Activated CD4-positive, alpha-beta T cell treated with anti-CD3 and anti-CD28 coated beads, Interleukin-2, amount 10 ng/mL, durations not matched to agents 24 days and 14 days (primary cell): ENCODE measurements at regions of chr3 and their contacts with region 1.

Region 1: DNA sequence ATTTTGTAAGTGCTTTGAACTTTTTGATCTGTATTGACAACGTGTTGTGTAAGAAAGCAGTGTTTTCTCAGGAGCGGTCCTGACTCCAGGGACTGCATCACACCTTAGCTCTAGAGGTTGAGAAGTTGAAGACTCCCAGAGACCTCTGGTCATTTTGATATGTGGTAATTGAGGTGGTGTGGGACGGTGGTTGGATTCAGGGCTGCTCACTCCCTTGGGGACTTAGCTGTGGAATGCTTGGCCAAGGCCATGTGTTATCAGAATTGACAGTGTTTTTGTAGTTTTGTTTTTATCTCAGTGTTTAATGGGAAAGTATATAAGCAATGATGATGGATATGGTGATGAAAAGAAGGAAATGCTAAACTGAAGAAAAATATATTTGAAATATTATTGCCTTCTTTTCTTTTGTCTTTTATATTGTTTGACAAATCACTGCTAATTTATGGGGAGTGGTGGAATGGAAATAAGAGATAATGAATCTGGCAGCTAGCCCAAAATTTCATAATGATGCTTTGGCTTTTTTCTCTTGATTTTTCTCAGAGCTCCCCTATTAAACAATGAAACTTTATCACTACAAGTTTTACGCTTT is 16.0 kb downstream of the CMSS1 start:
- DNase-seq: no peak
- H3K4me3 Mint-ChIP-seq: no peak overlapping the region
- H3K27ac Mint-ChIP-seq: no peak overlapping the region
- H3K4me1 Mint-ChIP-seq: peaks cover 15% of the 10 kb centered on the region
- H3K27me3 Mint-ChIP-seq: no peaks in the 10 kb centered on the region

Region 2: DNA sequence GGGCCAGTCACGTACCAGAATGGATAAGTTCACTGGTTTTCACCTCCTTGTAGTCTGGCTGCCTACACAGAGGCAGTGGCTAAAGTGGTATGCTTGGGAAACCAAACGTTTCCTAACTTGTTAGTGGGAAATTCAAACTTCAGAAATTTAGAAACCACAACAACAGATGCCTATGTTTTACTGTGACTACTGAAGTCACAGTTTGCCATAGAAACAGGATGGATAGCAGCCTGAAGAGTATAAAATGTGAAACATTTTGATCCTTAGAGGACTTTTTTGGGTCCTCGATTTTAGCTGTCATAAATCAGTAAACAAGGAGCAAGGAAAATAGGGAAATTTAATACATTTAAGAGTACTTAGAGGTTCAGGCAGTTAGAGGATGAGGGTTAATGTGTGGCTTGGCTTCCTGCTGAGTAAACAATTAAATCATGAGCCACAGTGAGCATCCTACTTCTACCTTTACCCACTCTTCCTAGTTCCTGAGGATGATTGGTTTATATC is 32.6 kb after region 1 on chr3:
- intact Hi-C with region 1: loop called (anchors 5 kb)
- DNase-seq: peak; percentile 81
- H3K4me3 Mint-ChIP-seq: peak overlapping the region; percentile 71
- H3K27ac Mint-ChIP-seq: peak overlapping the region; percentile 87
- H3K4me1 Mint-ChIP-seq: peaks cover 72% of the 10 kb centered on the region
- H3K27me3 Mint-ChIP-seq: no peaks in the 10 kb centered on the region

Region 3: GRCh38 chr3:100002599-100003350 is 169.1 kb after region 1 on chr3:
- intact Hi-C with region 1: no loop called
- DNase-seq: no peak
- H3K4me3 Mint-ChIP-seq: no peak overlapping the region
- H3K27ac Mint-ChIP-seq: no peak overlapping the region
- H3K4me1 Mint-ChIP-seq: peaks cover 17% of the 10 kb centered on the region
- H3K27me3 Mint-ChIP-seq: no peaks in the 10 kb centered on the region

Region 4: DNA sequence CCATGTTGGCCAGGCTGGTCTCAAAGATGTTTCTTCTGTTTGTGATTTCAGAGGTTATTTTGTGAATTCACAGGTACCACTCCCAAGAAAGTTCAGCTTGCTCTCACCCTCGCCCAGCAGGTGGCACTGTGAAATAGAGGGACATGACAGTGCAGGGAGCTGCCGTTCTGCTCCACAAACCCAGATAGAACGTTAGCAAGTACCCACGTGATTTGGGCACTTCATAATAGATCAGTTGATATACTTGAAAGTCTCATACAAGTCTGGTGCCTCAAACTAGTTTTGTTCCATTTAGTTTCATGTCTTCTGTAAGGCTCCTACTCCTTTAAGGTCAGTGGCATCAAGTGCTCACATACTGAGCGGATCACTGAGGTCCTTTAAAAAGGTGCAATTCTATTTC is 235.1 kb after region 1 on chr3:
- intact Hi-C with region 1: loop called (anchors 2 kb)
- DNase-seq: peak; percentile 94
- H3K4me3 Mint-ChIP-seq: no peak overlapping the region
- H3K27ac Mint-ChIP-seq: no peak overlapping the region
- H3K4me1 Mint-ChIP-seq: peaks cover 40% of the 10 kb centered on the region
- H3K27me3 Mint-ChIP-seq: no peaks in the 10 kb centered on the region

Region 5: DNA sequence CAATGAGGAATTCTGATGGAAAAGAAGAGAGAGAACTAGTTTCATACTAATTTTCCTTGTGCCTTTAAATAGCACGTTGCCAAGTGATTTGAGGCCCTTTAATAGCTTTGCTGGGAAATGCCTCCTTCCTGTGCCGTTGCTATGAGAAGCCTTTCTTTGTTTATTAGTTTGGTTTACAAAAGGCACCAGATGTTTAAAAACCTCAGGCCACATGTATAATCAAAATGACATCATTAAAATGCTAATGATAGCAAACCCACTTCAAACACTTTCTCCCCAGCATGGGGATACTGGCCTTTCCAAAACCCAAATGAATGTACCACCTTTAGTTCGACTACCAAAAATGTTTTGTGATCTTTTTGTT is 377.0 kb after region 1 on chr3:
- intact Hi-C with region 1: loop called (anchors 5 kb)
- DNase-seq: peak; percentile 75
- H3K4me3 Mint-ChIP-seq: no peak overlapping the region
- H3K27ac Mint-ChIP-seq: peak overlapping the region; percentile 82
- H3K4me1 Mint-ChIP-seq: peaks cover 20% of the 10 kb centered on the region
- H3K27me3 Mint-ChIP-seq: peaks cover 3% of the 10 kb centered on the region

Region 6: GRCh38 chr3:100254168-100254777 is 420.6 kb after region 1 on chr3:
- intact Hi-C with region 1: loop called (anchors 1 kb)
- DNase-seq: peak; percentile 86
- H3K4me3 Mint-ChIP-seq: no peak overlapping the region
- H3K27ac Mint-ChIP-seq: no peak overlapping the region
- H3K4me1 Mint-ChIP-seq: peaks cover 4% of the 10 kb centered on the region
- H3K27me3 Mint-ChIP-seq: no peaks in the 10 kb centered on the region

Region 7: DNA sequence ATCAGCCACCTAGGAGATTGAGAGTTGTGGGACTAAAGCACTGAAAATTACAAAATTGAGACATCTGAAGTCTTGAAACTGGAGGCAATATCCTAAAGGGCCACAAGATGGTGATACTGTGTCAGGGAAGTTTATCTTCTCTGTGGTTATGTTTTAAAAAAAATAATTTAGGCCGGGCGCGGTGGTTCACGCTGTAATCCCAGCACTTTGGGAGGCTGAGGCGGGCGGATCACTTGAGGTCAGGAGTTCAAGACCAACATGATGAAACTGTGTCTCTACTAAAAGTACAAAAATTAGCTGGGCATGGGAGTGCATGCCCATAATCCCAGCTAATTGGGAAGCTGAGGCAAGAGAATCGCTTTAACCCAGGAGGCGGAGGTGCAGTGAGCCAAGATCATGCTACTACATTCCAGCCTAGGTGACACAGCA is 482.9 kb after region 1 on chr3:
- intact Hi-C with region 1: loop called (anchors 5 kb)
- DNase-seq: peak; percentile 86
- H3K4me3 Mint-ChIP-seq: peak overlapping the region; percentile 40
- H3K27ac Mint-ChIP-seq: peak overlapping the region; percentile 55
- H3K4me1 Mint-ChIP-seq: peaks cover 11% of the 10 kb centered on the region
- H3K27me3 Mint-ChIP-seq: no peaks in the 10 kb centered on the region

Region 8: DNA sequence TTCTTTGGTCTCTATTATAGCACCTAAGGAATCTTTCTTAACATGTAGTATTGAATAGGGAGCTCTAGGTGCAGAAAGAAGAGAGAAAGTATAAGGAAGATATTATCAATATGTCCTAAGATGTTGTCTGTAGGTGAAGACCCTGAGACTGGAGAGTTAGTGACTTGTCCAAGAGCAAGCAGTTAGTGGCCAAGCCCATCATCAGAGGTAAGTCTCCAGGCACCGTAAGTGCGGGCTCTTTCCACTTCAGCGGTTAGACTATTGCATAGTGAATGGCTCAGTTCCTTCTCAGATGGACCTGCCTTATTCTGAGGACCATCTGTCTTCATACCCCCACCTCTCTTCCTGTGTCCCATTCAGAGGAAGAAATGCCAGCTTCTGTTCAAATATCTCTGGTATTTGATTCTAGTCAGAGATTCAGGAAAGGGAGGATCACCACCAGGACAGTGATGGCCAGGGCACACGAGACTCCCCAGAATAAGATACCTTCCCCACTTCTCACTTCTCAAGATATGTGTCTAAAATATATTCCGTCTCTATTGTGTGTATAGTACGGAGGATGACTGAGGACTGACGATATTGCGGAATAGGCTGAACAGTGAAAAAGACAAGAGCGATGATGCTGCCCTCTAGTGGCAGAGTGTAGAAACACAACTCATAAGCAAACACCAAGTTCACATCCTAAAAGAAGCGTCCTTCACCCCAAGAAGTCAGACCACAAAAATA is 756.6 kb after region 1 on chr3:
- intact Hi-C with region 1: loop called (anchors 2 kb)
- DNase-seq: peak; percentile 88
- H3K4me3 Mint-ChIP-seq: peak overlapping the region; percentile 23
- H3K27ac Mint-ChIP-seq: no peak overlapping the region
- H3K4me1 Mint-ChIP-seq: peaks cover 5% of the 10 kb centered on the region
- H3K27me3 Mint-ChIP-seq: peaks cover 16% of the 10 kb centered on the region